AG04450 (cell line): ENCODE measurements at regions of chr19 and their contacts with region 1.

Region 1: DNA sequence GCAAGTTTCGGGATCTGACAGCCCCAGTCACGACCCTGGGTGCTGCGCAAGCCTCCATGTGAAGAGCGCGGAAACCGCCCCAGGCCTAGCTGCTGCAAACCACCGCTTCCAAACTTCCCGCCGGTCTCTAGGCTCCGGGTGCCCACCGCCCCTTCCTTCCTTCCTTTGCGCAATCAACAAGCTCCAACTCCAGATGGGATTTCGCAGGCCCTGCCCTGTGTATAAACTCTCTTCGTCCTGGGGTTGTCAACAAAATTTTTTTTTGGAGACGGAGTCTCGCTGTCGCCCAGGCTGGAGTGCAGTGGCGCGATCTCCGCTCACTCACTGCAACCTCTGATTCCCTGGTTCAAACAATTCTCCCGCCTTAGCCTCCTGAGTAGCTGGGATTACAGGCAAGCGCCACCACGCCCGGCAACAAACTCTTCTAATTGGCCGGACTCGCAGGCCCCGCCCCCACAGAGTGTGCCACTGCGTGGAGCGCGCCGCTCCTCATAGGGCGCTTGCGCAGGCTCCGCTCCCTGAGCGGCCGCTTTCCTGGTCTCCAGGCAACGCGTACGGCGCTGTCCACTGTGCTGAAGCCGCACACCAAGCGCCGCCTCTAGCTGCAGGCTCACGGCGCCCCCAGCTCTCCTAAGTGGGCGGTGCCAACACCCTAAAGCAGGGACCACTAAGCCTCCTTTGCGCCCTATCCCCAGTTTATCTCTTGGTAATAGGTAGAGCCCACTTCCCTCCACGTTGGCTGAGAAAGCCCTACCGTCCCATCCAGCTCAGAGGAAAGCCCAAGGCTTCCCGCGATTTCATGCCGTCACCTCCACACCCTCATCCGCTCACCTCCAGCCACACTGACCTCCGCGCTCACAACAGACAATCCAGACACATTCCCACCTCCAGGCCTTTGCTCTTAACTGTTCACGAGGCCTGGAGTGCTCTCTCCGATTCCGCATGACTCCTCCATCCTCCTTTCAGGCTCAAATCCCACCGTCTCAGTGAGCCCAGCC is 5.5 kb upstream of the QTRT1 start:
- DNase-seq: peak; percentile 85
- H3K4me3 ChIP-seq: no peak overlapping the region
- H3K27ac ChIP-seq: no peak overlapping the region
- H3K27me3 ChIP-seq: no peaks in the 10 kb centered on the region
- CTCF ChIP-seq: no peak

Region 2: DNA sequence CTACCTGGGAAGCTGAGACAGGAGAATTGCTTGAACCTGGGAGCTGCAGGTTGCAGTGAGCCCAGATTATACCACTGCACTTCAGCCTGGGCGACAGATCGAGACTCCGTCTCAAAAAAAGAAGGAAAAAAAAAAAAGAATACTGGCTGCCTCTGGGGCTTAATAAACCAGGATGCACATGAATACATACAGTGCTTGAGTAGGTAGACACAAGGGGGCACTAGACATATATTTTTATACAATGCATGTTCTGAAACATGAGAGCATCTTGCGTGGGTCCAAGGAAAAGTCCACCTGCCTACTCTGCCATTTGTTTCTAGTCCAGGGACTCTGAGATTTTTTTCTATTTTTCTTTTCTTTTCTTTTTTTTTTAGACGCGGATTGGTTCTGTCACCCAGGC is 223.8 kb before region 1 on chr19:
- CTCF ChIA-PET with region 1: interaction called, 10 read pairs
- POLR2A ChIA-PET with region 1: no interaction called
- DNase-seq: no peak
- H3K4me3 ChIP-seq: no peak overlapping the region
- H3K27ac ChIP-seq: no peak overlapping the region
- H3K27me3 ChIP-seq: no peaks in the 10 kb centered on the region
- CTCF ChIP-seq: peak; percentile 56

Region 3: GRCh38 chr19:10580979-10581631 is 114.6 kb before region 1 on chr19:
- CTCF ChIA-PET with region 1: interaction called, 86 read pairs
- POLR2A ChIA-PET with region 1: no interaction called
- DNase-seq: peak; percentile 83
- H3K4me3 ChIP-seq: no peak overlapping the region
- H3K27ac ChIP-seq: no peak overlapping the region
- H3K27me3 ChIP-seq: peaks cover 9% of the 10 kb centered on the region
- CTCF ChIP-seq: peak; percentile 100

Region 4: GRCh38 chr19:10670182-10670581 is 25.5 kb before region 1 on chr19:
- CTCF ChIA-PET with region 1: interaction called, 15 read pairs
- POLR2A ChIA-PET with region 1: interaction called, 6 read pairs
- DNase-seq: no peak
- H3K4me3 ChIP-seq: no peak overlapping the region
- H3K27ac ChIP-seq: no peak overlapping the region
- H3K27me3 ChIP-seq: no peaks in the 10 kb centered on the region
- CTCF ChIP-seq: no peak

Region 5: DNA sequence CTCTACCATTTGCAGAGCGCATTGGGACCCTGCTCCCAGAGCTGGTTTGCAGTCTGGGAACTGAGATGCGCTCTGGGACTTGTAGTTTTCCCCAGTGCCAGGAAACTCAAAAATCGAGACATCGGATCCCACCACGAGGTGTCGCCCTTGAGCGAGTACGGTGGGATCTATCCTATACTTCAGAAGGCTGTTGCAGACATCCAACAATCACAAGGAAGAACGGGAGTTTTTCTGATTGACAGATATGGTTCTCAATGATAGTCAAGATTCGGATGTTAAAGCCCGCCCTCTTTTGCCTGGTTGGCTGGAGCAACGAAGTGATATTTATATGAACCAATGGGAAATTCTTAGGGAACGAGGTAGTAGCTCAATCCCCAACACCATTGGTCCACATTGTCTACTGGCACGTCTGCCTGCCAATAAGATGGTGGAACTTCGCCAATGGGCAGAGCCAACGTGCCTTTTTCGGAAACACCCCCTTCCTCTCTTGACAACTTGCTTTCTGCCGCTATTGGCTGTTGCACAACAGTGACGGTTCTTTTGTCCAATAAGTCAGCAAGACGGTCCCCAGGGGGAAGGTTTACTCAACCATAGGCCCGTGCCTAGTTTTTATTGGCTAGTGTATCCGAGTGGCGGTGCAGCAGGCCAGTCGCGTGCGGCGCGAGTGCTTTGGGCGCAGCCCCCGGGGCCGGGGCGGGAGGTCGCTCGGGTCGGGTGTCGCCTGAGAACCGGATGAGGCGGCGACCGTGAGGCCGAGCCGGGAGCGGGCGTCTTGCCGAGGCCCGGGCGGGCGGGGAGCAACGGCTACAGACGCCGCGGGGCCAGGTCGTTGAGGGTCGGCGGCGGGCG is 21.9 kb after region 1 on chr19 and contains the start of gene DNM2:
- CTCF ChIA-PET with region 1: interaction called, 20 read pairs
- POLR2A ChIA-PET with region 1: no interaction called
- DNase-seq: peak; percentile 100
- H3K4me3 ChIP-seq: peak within 1 kb of the TSS; percentile 92
- H3K27ac ChIP-seq: peak within 1 kb of the TSS; percentile 52
- H3K27me3 ChIP-seq: no peaks in the 10 kb centered on the region
- CTCF ChIP-seq: peak; percentile 82
- polyA plus RNA-seq, gene DNM2: 36.9 and 49.1 TPM in 2 replicates

Region 6: GRCh38 chr19:10751109-10751953 is 55.6 kb after region 1 on chr19:
- CTCF ChIA-PET with region 1: no interaction called
- POLR2A ChIA-PET with region 1: no interaction called
- DNase-seq: no peak
- H3K4me3 ChIP-seq: no peak overlapping the region
- H3K27ac ChIP-seq: no peak overlapping the region
- H3K27me3 ChIP-seq: no peaks in the 10 kb centered on the region
- CTCF ChIP-seq: no peak